GM13976 (cell line): ENCODE measurements at regions of chr15 and their contacts with region 1.

Region 1: DNA sequence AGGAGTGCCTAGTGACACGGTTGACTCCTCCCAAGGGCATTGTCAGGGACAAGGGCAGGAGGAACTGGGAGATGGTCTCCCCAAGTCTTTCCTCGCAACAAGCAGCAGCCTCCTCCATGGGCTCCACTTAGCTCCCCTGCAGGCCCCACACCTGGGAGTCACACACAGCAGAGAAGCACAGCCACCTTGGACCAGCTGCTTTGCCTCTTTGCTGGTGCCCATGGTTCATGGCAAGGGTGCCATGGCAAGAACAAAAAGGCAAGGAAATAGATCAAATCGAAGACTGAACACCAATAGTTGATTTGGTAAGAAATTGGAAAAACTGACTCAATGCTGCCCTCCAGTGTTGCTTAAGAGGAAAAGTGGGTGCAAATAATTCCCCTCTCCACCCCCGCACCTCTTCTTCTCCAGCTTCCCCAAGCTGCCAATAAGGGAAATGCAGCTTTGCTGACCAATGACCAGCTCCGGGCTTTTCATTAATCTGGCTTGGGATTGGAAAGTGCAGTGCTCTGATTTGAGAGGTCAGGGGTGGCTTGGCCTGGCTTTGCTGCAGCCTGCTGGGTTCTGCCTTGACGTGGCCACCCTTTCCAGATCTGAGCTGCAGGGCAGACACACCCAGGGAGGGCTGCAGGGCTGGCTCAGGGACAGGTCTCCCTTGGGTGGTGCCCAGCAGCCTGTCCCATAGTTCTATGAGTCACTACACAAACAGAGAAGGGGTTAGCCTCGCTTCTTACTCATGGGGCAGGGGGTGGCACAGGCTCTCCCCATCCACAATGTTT is 162.0 kb downstream of the KLF13 start:
- DNase-seq: peak; percentile 84
- CTCF ChIP-seq: peak; percentile 66

Region 2: DNA sequence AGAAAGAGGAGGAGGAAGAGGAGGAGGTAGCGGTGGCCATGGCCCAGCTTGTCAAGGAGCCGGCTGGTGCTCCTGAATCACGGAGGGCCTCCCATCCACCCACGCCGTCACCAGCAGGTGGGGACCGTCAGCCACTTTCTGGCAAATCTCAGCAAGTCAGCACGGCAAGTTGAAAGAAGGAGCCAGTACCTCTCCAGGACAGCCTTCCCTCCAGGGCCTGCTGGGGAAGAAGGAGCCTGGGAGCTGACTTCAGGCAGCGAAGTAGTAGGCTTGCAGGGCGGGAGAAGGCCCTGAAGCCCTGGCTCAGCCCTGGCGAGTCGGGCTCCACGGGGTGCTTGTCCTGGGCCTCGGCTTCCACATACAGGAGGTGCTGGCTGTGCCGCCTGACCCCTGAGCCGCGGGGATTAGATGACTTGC is 287.9 kb before region 1 on chr15:
- in situ Hi-C with region 1: loop called (anchors 10 kb)
- DNase-seq: peak; percentile 72
- CTCF ChIP-seq: no peak

Region 3: DNA sequence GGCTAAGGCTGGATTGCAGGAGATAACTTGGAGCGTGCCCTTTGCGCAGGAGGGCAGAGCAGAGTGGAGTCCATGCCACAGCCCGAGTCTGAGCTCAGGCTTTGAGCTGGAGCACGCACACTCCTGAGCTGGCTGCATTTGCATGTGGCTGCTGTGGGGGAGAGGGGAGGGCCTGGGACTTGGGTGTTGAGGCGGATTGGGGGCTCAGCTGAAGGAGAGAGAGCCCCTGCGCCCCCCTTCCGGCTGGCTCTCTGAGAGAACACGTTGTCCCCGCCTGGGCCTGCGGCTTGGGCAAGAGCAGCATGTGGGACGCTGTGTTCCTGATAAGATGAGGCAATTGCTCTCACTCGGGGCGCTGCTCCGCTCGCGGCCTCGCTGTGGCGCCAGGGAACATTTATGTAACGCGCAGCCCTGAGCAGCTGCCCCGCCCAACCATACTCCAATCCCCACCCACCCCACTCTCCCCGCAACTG is 122.9 kb before region 1 on chr15:
- in situ Hi-C with region 1: loop called (anchors 10 kb)
- DNase-seq: peak; percentile 87
- CTCF ChIP-seq: peak; percentile 55

Region 4: GRCh38 chr15:31435261-31435911 is 53.2 kb before region 1 on chr15:
- in situ Hi-C with region 1: loop called (anchors 5 kb)
- DNase-seq: peak; percentile 84
- CTCF ChIP-seq: peak; percentile 86

Region 5: GRCh38 chr15:31590609-31591008 is 102.0 kb after region 1 on chr15:
- in situ Hi-C with region 1: no loop called
- DNase-seq: no peak
- CTCF ChIP-seq: no peak